ENCODE measurements at regions of chr2 and their contacts with region 1.

Region 1: DNA sequence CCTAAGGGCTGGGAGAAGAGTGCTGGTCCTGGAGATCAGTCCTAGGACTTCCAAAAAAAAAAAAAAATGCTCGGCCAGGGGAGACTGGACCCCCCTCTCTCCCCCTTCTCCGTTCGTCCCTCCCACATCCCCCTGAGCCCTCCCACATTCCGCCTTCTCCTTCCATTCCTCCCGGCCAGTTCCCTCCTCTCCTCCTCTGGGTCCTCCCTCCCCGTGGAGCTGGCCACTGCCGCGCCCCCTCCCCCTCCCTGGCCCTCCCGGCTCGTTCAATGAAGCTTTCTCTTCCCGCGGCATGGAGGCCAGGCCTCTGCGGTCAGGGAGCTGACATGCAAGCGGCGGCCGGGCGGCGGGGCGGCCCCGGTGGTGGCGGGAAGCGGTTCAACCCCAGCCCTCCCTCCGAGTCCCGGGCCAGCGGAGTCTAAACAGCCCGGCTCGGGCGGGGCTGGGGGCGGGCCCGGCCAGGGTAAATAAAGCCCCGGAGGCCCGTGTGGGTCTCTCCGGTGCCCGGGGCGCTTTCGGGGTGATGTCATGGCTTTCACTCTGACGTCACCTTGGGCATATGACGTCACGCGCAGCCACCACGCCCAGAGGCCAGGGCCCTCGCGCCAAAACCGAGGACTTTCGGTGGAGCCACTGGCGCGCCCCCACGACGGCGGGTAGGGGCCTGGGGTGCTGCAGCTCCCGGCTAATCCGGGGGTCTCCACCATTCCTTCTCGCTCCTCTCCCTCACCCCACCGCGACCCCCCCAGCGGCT is at the start of gene LOXL3:
- DNase-seq: peak; percentile 63 to 66
- H3K4me3 ChIP-seq: peak within 1 kb of the TSS; percentile 73 to 83 (median 73)
- H3K27ac ChIP-seq: peak within 1 kb of the TSS; percentile 80 to 87
- H3K4me1 ChIP-seq: no peaks in the 10 kb centered on the region
- H3K27me3 ChIP-seq: no peaks in the 10 kb centered on the region
- CTCF ChIP-seq: no peak
- POLR2A ChIP-seq: no peak
- total RNA-seq, gene LOXL3: 3.7 to 7.8 (median 6.6) TPM

Region 2: GRCh38 chr2:73385595-73386341 is 1168.3 kb before region 1 on chr2 and contains the start of gene ALMS1:
- intact Hi-C with region 1: loop called (anchors 5 kb)
- DNase-seq: peak; percentile 61 to 77
- H3K4me3 ChIP-seq: peak within 1 kb of the TSS; percentile 69 to 75 (median 74)
- H3K27ac ChIP-seq: peak within 1 kb of the TSS; percentile 87 to 90
- H3K4me1 ChIP-seq: no peaks in the 10 kb centered on the region
- H3K27me3 ChIP-seq: no peaks in the 10 kb centered on the region
- CTCF ChIP-seq: peak in 1 of 3 donors; percentile 29
- POLR2A ChIP-seq: no peak
- total RNA-seq, gene ALMS1: 38.7 to 53.1 (median 40.6) TPM

Region 3: GRCh38 chr2:75113231-75113869 is 559.3 kb after region 1 on chr2:
- intact Hi-C with region 1: loop called (anchors 5 kb)
- DNase-seq: no peak
- H3K4me3 ChIP-seq: no peak overlapping the region
- H3K27ac ChIP-seq: no peak overlapping the region
- H3K4me1 ChIP-seq: no peaks in the 10 kb centered on the region
- H3K27me3 ChIP-seq: no peaks in the 10 kb centered on the region
- CTCF ChIP-seq: no peak
- POLR2A ChIP-seq: no peak

Region 4: DNA sequence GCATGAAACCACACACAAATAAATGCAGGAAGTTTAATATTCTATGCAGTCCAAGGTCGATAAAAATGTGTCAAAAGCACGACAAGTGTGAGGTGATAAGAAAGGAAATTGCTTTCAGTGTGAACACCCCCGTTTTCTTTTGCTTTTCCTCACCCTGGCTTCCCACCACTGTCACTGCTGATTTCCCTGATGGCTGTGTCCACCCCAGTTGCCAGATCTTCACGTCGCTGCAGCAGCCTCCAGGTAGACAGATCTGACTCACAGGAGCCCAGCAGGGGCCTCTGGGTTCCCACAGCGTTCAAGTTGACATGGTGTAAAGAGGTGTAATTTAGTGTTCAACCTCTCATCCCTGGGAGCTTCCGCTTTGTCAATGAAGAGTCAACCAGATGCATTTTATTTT is 773.3 kb after region 1 on chr2:
- intact Hi-C with region 1: loop called (anchors 5 kb)
- DNase-seq: no peak
- H3K4me3 ChIP-seq: no peak overlapping the region
- H3K27ac ChIP-seq: no peak overlapping the region
- H3K4me1 ChIP-seq: no peaks in the 10 kb centered on the region
- H3K27me3 ChIP-seq: no peaks in the 10 kb centered on the region
- CTCF ChIP-seq: no peak
- POLR2A ChIP-seq: no peak

Measured in breast epithelium (tissue), 4 donors.